Tibial artery (tissue), 4 donors: ENCODE measurements at regions of chr4 and their contacts with region 1.

Region 1: GRCh38 chr4:186587416-186588018 is 32.1 kb upstream of the MTNR1A start:
- DNase-seq: peak; percentile 74 to 84
- H3K4me3 ChIP-seq: no peak overlapping the region
- H3K27ac ChIP-seq: no peak overlapping the region
- H3K4me1 ChIP-seq: peaks cover 0 to 16% (median 2%) of the 10 kb centered on the region in 4 donors
- H3K27me3 ChIP-seq: no peaks in the 10 kb centered on the region
- CTCF ChIP-seq: peak; percentile 67 to 89

Region 2: GRCh38 chr4:186297013-186297645 is 290.4 kb before region 1 on chr4:
- intact Hi-C with region 1: loop called (anchors 5 kb)
- DNase-seq: no peak
- H3K4me3 ChIP-seq: no peak overlapping the region
- H3K27ac ChIP-seq: no peak overlapping the region
- H3K4me1 ChIP-seq: no peaks in the 10 kb centered on the region
- H3K27me3 ChIP-seq: peaks cover 0 to 19% of the 10 kb centered on the region in 2 donors
- CTCF ChIP-seq: peak; percentile 50 to 52

Region 3: DNA sequence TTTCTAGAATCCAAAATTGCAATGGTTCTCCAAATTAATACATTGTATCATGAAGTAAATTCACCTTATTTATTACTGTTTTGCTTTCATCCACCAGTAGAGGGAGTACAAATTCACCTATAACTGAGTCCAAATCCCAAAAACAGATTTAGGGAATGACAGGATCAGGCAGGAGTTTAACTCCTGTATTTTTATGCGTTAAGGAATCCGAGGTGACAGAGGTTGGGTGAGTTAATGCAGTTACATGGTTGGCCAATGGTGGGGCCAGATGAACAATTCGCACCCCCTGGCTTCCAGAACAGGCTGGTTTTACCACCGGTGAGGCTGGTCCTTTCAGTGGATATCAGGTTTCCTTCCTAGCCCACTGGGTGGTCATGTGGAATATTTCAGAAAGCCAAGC is 114.6 kb before region 1 on chr4:
- intact Hi-C with region 1: loop called (anchors 5 kb)
- DNase-seq: no peak
- H3K4me3 ChIP-seq: no peak overlapping the region
- H3K27ac ChIP-seq: no peak overlapping the region
- H3K4me1 ChIP-seq: no peaks in the 10 kb centered on the region
- H3K27me3 ChIP-seq: peaks cover 0 to 3% of the 10 kb centered on the region in 2 donors
- CTCF ChIP-seq: peak; percentile 58 to 63